ENCODE measurements at regions of chr7 and their contacts with region 1.

Region 1: DNA sequence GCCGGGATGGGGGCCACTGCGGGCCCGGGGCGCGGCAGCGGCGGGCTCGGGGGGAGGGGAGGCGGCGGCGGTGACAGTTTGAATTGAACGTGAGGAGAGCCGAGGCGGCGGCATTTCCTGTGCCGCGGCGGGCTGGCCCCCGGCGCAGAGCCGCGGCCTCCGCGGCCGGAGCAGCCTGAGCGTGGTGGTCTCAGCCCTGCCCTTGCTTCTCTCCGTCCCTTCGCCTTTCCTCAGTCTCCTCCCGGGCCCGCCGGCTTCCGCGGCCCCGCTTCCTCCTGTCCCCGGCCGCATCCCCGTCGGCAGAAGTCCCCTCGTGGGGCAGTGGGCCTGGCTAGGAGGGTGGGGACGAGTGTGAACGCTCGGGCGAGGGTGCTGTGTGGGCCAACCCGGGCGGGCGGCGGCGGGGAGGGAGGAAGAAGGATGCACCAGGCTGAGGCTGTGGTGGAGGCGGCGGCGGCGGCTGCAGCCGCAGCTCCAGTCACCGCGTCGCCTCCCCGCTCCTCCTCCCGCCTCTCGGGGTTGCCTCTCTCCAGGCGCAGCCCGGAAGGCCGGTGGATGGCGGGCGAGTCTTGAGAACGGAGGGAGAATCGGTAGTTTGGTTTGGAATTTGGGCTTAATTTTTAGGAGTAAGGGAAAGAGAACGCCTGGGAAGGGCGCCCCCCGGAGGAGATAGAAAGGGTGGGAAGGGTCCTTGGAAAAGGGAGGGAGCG is 690 bp downstream of the SEPTIN7 start:
- DNase-seq: peak; percentile 93
- H3K4me3 ChIP-seq: peak overlapping the region; percentile 71 to 99 (median 96)
- H3K27ac ChIP-seq: peak overlapping the region; percentile 96 to 99 (median 98)
- H3K4me1 ChIP-seq: peaks cover 35 to 54% (median 50%) of the 10 kb centered on the region in 4 donors
- H3K27me3 ChIP-seq: no peaks in the 10 kb centered on the region
- CTCF ChIP-seq: peak; percentile 61 to 63 (median 62)
- EP300 ChIP-seq: no peak
- POLR2A ChIP-seq: no peak

Region 2: DNA sequence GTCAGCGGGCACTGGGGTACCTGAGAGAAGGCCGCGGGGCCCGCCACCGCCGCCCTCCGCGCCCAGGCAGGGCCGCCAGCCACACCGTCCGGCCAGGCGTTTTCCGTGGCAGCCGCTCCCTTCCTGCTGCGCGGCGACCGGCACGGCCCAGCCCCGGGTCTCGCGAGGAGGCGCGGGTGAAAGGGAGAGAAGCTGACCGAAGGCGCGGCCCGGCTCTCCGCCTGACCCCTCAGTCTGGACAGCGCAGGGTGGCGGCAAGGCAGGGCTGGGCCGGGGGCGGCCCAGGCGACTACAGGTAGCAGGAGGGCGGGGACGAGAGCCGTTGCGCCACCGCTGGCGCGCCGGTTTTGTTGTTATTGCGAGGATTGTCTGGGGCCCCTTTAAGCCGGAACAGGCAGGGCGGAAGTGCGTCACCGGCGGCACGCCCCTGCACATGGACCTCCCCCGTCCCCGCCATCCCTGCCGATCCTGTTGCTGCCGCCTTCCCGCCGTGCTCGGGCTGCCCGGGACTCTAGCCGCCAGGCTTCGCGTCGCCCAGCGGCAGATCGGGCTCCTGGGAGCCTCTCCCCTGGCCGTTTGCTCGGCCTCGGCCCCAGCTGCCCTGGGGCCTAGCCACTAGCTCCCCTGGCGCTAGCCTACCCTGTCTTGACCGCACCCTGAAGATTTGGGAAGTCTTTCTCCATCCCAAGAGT is 106.6 kb before region 1 on chr7 and contains the start of gene HERPUD2:
- intact Hi-C with region 1: loop called (anchors 5 kb)
- DNase-seq: peak; percentile 96
- H3K4me3 ChIP-seq: peak within 1 kb of the TSS; percentile 89 to 99 (median 96)
- H3K27ac ChIP-seq: peak within 1 kb of the TSS; percentile 91 to 98 (median 95)
- H3K4me1 ChIP-seq: peaks cover 37 to 55% (median 49%) of the 10 kb centered on the region in 4 donors
- H3K27me3 ChIP-seq: no peaks in the 10 kb centered on the region
- CTCF ChIP-seq: no peak
- EP300 ChIP-seq: no peak
- POLR2A ChIP-seq: peak; percentile 47
- total RNA-seq, gene HERPUD2: 25.3 to 43.4 (median 33.9) TPM

Region 3: GRCh38 chr7:35716038-35716803 is 85.3 kb before region 1 on chr7:
- intact Hi-C with region 1: loop called (anchors 5 kb)
- DNase-seq: no peak
- H3K4me3 ChIP-seq: peak overlapping the region in 3 of 4 donors; percentile 12 to 32 (median 26)
- H3K27ac ChIP-seq: peak overlapping the region in 3 of 4 donors; percentile 9 to 48 (median 29)
- H3K4me1 ChIP-seq: peaks cover 4 to 22% (median 15%) of the 10 kb centered on the region in 4 donors
- H3K27me3 ChIP-seq: no peaks in the 10 kb centered on the region
- CTCF ChIP-seq: no peak
- EP300 ChIP-seq: no peak
- POLR2A ChIP-seq: no peak

Region 4: DNA sequence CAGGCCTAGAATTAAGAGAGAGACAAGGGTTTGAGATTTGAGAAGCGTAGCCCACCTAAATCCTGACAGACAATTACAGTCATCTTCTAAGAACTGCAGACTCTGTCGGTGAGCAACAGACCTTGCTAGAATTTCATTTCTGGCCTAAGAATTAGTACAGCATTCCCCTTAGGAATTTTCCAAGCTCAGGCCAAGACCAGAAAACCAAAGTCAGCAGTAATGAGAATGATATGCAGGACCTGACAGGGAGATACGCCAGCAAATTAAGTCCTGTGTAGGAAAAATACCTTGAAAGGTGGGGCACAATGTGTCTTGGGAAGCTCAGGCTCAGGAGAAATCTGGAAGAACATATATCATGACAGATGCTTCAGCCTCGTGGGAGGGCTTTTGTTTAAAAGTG is 53.9 kb before region 1 on chr7:
- intact Hi-C with region 1: no loop called
- DNase-seq: no peak
- H3K4me3 ChIP-seq: no peak overlapping the region
- H3K27ac ChIP-seq: no peak overlapping the region
- H3K4me1 ChIP-seq: no peaks in the 10 kb centered on the region
- H3K27me3 ChIP-seq: no peaks in the 10 kb centered on the region
- CTCF ChIP-seq: no peak
- EP300 ChIP-seq: no peak
- POLR2A ChIP-seq: no peak

Region 5: DNA sequence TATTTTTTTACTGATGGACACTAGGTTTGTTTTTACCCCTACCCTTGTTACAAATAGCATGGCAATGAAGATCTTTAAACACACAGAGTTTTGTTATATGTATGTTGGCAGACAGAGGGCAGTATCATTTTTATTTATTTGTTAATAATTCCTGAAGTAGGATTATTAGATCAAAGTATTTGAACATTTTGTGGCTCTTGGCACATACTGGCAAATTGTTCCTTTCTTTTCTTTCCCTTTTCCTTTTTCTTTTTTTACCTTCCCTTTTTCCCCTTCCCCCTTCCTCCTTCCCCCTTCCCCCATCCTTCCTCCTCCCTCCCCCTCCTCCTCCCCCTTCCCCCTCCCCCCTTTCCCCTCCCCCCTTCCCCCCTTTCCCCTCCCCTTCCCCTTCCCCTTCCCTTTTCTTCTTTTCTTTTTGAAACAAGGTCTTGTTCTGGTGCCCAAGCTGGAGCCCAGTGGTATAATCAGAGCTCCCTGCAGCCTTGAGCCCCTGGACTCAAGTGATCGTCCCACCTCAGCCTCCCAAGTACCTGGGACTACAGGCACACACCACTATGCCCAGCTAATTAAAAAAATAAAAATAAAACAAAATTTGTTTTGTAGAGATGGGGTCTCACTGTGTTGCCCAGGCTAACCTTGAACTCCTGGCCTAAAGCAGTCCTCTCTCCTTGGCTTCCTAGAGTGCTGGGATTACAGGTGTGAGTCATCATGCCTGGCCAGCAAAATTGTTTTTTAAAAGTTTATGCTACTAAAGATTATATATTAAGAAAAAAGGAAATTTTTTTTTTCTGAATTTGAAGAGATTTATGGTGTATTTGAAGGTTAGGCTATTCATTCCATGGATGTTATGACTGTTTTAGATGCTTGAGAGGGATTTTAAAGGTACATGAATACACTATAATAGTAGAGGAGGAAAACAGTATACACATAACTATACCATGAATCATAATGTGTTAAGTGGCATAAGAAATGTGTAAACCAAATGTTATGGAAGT is 38.6 kb after region 1 on chr7:
- intact Hi-C with region 1: loop called (anchors 5 kb)
- DNase-seq: no peak
- H3K4me3 ChIP-seq: no peak overlapping the region
- H3K27ac ChIP-seq: no peak overlapping the region
- H3K4me1 ChIP-seq: peaks cover 6 to 37% (median 22%) of the 10 kb centered on the region in 4 donors
- H3K27me3 ChIP-seq: no peaks in the 10 kb centered on the region
- CTCF ChIP-seq: no peak
- EP300 ChIP-seq: no peak
- POLR2A ChIP-seq: no peak

Region 6: DNA sequence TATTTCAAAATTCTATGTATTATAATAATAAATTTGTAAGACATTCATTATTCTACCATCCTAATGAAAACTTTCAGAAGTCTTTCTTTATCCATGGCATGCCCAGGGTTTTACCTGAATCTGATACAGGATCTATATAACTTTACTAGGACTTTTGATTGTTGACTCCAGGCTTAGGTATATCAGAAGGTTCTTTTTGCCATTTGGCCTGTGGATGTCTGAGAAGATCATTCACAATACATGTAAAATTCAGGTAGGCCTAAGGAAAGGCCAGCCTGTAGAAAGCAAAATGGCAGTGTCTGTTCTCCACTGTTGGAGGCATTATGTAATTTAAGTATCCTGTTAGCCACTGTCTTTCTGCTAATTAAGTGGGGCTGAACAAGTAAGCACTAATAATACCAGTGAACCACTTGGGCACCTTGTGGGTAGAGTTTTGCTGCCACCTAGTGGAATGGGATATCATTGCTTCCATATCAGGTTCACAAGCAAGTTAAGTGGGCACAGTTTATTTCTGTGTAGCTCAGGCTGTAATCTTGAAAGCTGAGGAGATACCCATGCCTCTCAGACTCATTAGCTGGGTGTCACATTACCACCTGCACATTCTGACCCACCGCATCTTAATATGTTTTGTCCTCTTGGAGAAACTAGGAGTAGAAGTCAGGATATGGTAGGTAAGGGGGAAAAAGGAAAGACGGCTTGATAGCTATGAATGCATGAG is 104.8 kb after region 1 on chr7:
- intact Hi-C with region 1: loop called (anchors 2 kb)
- DNase-seq: no peak
- H3K4me3 ChIP-seq: no peak overlapping the region
- H3K27ac ChIP-seq: no peak overlapping the region
- H3K4me1 ChIP-seq: peaks cover 0 to 16% (median 5%) of the 10 kb centered on the region in 4 donors
- H3K27me3 ChIP-seq: no peaks in the 10 kb centered on the region
- CTCF ChIP-seq: peak; percentile 90 to 95 (median 94)
- EP300 ChIP-seq: no peak
- POLR2A ChIP-seq: no peak

Region 7: GRCh38 chr7:36015733-36016132 is 214.2 kb after region 1 on chr7:
- intact Hi-C with region 1: no loop called
- DNase-seq: no peak
- H3K4me3 ChIP-seq: no peak overlapping the region
- H3K27ac ChIP-seq: no peak overlapping the region
- H3K4me1 ChIP-seq: peaks cover 0 to 19% (median 14%) of the 10 kb centered on the region in 4 donors
- H3K27me3 ChIP-seq: no peaks in the 10 kb centered on the region
- CTCF ChIP-seq: no peak
- EP300 ChIP-seq: no peak
- POLR2A ChIP-seq: no peak

Region 8: GRCh38 chr7:36057323-36057722 is 255.8 kb after region 1 on chr7:
- intact Hi-C with region 1: no loop called
- DNase-seq: no peak
- H3K4me3 ChIP-seq: no peak overlapping the region
- H3K27ac ChIP-seq: no peak overlapping the region
- H3K4me1 ChIP-seq: no peaks in the 10 kb centered on the region
- H3K27me3 ChIP-seq: no peaks in the 10 kb centered on the region
- CTCF ChIP-seq: no peak
- EP300 ChIP-seq: no peak
- POLR2A ChIP-seq: no peak

Measured in esophagus muscularis mucosa (tissue), 4 donors.